AG04449 (cell line): ENCODE measurements at regions of chr18 and their contacts with region 1.

Region 1: DNA sequence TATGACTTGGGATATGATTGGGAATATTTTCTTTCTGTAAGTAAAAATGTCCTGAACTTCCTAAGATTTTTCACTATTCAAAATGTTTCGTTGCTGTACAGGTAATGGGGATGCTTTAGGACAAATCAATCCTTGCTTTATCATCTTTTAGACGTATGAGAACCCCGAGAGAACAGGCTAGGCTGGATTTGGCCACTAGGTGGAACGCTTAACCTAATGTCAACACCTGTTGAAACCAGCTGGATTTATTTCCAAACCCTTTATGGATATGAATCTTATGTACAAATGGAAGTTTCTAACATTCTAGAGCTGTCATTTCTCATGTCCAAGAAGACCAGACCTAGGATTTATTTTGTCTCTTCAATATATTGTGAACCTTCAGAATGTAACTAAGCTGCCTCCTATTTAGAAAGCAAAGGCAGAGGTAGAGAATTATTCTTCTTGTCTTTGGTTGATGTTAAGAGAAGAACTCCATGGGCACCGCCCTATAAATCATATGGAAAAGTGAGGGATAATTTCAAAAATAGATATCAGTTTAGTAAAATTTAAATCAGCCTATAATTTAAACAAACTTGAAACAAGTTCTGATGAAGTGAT is 96.7 kb downstream of the PMAIP1 start:
- DNase-seq: no peak
- H3K4me3 ChIP-seq: no peak overlapping the region
- CTCF ChIP-seq: peak; percentile 78

Region 2: DNA sequence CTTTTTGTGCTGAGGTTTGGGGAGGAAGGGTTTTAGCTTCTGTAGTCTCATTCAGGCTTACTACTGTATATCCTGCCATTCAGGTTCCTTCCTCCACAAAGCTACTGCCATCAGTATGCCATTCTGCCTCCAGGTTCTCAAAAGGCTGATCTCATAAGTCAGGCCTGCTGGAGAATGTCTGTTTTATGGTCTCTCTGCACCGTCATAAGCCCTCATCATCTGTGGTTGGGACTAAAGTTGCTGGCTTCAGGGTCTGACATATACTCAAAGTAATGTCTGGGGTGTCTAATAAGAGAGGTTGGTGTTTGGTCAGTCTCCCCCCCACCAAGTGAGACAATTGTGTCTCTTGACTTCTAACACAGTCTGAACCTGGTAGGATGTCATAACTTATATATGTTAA is 263.0 kb before region 1 on chr18:
- CTCF ChIA-PET with region 1: no interaction called
- POLR2A ChIA-PET with region 1: no interaction called
- DNase-seq: no peak
- H3K4me3 ChIP-seq: no peak overlapping the region
- CTCF ChIP-seq: no peak

Region 3: GRCh38 chr18:60007661-60008060 is 11.2 kb after region 1 on chr18:
- CTCF ChIA-PET with region 1: interaction called, 17 read pairs
- POLR2A ChIA-PET with region 1: no interaction called
- DNase-seq: no peak
- H3K4me3 ChIP-seq: no peak overlapping the region
- CTCF ChIP-seq: no peak

Region 4: GRCh38 chr18:60020601-60020925 is 24.1 kb after region 1 on chr18:
- CTCF ChIA-PET with region 1: interaction called, 12 read pairs
- POLR2A ChIA-PET with region 1: no interaction called
- DNase-seq: no peak
- H3K4me3 ChIP-seq: no peak overlapping the region
- CTCF ChIP-seq: no peak

Region 5: GRCh38 chr18:60100778-60101177 is 104.3 kb after region 1 on chr18:
- CTCF ChIA-PET with region 1: no interaction called
- POLR2A ChIA-PET with region 1: no interaction called
- DNase-seq: no peak
- H3K4me3 ChIP-seq: no peak overlapping the region
- CTCF ChIP-seq: no peak

Region 6: GRCh38 chr18:60413944-60414547 is 417.6 kb after region 1 on chr18:
- CTCF ChIA-PET with region 1: interaction called, 10 read pairs
- POLR2A ChIA-PET with region 1: no interaction called
- DNase-seq: no peak
- H3K4me3 ChIP-seq: no peak overlapping the region
- CTCF ChIP-seq: peak; percentile 48

Region 7: GRCh38 chr18:60503199-60503598 is 506.7 kb after region 1 on chr18:
- CTCF ChIA-PET with region 1: interaction called, 11 read pairs
- POLR2A ChIA-PET with region 1: no interaction called
- DNase-seq: no peak
- H3K4me3 ChIP-seq: no peak overlapping the region
- CTCF ChIP-seq: no peak

Region 8: GRCh38 chr18:60534538-60534937 is 538.1 kb after region 1 on chr18:
- CTCF ChIA-PET with region 1: interaction called, 13 read pairs
- POLR2A ChIA-PET with region 1: no interaction called
- DNase-seq: peak; percentile 7
- H3K4me3 ChIP-seq: no peak overlapping the region
- CTCF ChIP-seq: no peak

Region 9: DNA sequence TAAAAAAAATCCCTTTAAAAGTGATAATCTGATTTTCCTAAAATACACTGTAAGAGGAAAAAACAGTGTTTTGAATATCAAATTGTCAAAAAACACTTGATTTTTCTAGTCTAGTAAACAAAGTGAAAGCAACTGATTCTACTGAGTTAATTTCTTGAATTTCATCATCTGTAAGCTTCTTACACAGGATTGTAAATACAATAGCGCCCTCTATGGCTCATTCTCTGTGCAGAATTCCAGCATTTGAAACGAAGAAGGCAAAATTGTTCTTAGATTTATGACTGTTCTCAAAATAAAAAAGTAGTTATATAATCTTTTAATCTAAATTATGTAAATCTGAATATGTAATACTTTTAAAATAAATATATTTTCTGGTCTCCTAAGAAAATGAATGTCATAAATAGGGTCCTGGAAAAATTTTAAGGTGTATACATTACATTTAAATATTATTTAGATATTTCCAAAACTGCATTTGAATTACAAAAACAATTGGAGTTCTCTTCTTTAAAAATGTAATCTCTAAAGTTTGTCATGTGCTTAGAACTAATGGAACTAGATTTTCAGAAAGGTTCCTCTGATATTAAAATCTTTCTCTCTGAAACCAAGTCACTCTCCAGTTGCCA is 553.0 kb after region 1 on chr18:
- CTCF ChIA-PET with region 1: interaction called, 138 read pairs
- POLR2A ChIA-PET with region 1: no interaction called
- DNase-seq: peak; percentile 53
- H3K4me3 ChIP-seq: no peak overlapping the region
- CTCF ChIP-seq: peak; percentile 60